Natural killer cell (primary cell): ENCODE measurements at regions of chr3 and their contacts with region 1.

Region 1: GRCh38 chr3:32177702-32178198 is 60.7 kb upstream of the CMTM8 start:
- DNase-seq: peak in 1 of 2 donors; percentile 67
- ATAC-seq: peak; percentile 65 to 72 (median 72)
- H3K4me3 ChIP-seq: no peak overlapping the region
- H3K4me3 Mint-ChIP-seq: no peak overlapping the region
- H3K27ac ChIP-seq: no peak overlapping the region
- H3K27ac Mint-ChIP-seq: no peak overlapping the region
- H3K4me1 ChIP-seq: no peaks in the 10 kb centered on the region
- H3K4me1 Mint-ChIP-seq: peaks cover 10 to 14% of the 10 kb centered on the region in 2 donors
- H3K27me3 ChIP-seq: no peaks in the 10 kb centered on the region
- H3K27me3 Mint-ChIP-seq: peaks cover 1 to 13% of the 10 kb centered on the region in 2 donors
- CTCF ChIP-seq: no peak

Region 2: GRCh38 chr3:32340039-32340438 is 162.3 kb after region 1 on chr3:
- intact Hi-C with region 1: loop called (anchors 2 kb)
- DNase-seq: peak in 1 of 2 donors; percentile 73
- ATAC-seq: no peak
- H3K4me3 ChIP-seq: no peak overlapping the region
- H3K4me3 Mint-ChIP-seq: no peak overlapping the region
- H3K27ac ChIP-seq: no peak overlapping the region
- H3K27ac Mint-ChIP-seq: no peak overlapping the region
- H3K4me1 ChIP-seq: no peaks in the 10 kb centered on the region
- H3K4me1 Mint-ChIP-seq: no peaks in the 10 kb centered on the region
- H3K27me3 ChIP-seq: no peaks in the 10 kb centered on the region
- H3K27me3 Mint-ChIP-seq: no peaks in the 10 kb centered on the region
- CTCF ChIP-seq: no peak

Region 3: GRCh38 chr3:32399030-32399620 is 221.4 kb after region 1 on chr3:
- intact Hi-C with region 1: loop called (anchors 5 kb)
- DNase-seq: peak in 1 of 2 donors; percentile 87
- ATAC-seq: peak; percentile 37 to 45 (median 42)
- H3K4me3 ChIP-seq: no peak overlapping the region
- H3K4me3 Mint-ChIP-seq: peak overlapping the region; percentile 45
- H3K27ac ChIP-seq: no peak overlapping the region
- H3K27ac Mint-ChIP-seq: peak overlapping the region; percentile 10 to 31
- H3K4me1 ChIP-seq: peaks cover 29% of the 10 kb centered on the region
- H3K4me1 Mint-ChIP-seq: peaks cover 39 to 41% of the 10 kb centered on the region in 2 donors
- H3K27me3 ChIP-seq: no peaks in the 10 kb centered on the region
- H3K27me3 Mint-ChIP-seq: no peaks in the 10 kb centered on the region
- CTCF ChIP-seq: peak; percentile 68

Region 4: DNA sequence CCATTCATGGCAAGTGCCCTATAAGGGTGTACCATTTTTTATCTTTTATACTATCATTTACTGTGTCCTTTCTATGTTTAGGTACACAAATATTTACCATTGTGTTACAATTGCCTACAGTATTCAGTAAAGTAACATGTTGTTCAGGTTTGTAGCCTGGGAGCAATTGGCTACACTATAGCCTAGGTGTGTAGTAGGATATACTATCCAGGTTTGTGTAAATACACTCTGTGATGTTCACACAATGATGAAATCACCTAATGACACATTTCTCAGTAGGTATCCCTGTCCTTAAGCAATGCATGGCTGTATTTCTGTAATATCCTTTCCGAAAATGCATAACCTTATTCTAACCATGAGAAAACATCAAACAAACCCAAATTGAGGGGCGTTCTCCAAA is 489.4 kb after region 1 on chr3:
- intact Hi-C with region 1: loop called (anchors 10 kb)
- DNase-seq: no peak
- ATAC-seq: no peak
- H3K4me3 ChIP-seq: no peak overlapping the region
- H3K4me3 Mint-ChIP-seq: no peak overlapping the region
- H3K27ac ChIP-seq: no peak overlapping the region
- H3K27ac Mint-ChIP-seq: no peak overlapping the region
- H3K4me1 ChIP-seq: no peaks in the 10 kb centered on the region
- H3K4me1 Mint-ChIP-seq: no peaks in the 10 kb centered on the region
- H3K27me3 ChIP-seq: no peaks in the 10 kb centered on the region
- H3K27me3 Mint-ChIP-seq: peaks cover 7% of the 10 kb centered on the region in 2 donors
- CTCF ChIP-seq: no peak